Panc1 (cell line): ENCODE measurements at regions of chr10 and their contacts with region 1.

Region 1: DNA sequence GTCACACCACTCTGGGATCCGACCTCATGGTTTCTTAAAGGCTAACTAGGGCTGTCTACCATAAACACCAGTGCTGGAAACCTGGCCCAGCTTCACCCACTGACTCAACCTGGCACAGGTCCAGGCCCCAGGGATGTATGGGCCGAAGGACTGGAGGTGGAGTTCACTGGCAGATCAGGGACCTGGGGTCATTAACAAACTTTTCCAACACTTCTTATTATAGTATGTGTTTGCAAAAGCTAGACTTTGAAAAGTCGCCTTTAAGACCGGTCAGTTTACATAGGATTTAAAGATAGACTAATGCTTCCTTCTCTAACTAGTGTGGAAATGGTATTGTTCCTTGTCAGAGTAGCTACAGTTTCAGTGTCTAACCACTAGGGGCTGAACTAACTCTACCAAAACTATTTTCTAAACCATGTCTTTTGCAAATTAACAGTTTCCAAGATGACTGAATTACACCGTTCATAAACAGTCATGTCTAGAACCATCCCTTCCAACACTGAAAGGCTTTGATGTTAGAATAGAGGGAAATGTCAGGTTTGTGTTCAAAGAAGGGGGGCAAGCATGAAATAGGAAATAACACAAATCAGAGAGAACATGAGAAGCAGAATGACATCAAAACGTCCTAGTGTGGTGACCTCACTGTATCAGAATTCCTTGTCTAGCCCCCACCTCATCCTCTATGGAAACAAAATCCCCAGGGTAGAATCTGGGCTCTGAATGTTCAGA is 29.7 kb downstream of the STN1 start:
- DNase-seq: peak; percentile 75
- ATAC-seq: peak; percentile 75
- H3K4me3 ChIP-seq: no peak overlapping the region
- H3K27ac ChIP-seq: no peak overlapping the region; the same call in 1 of the 2 replicates
- H3K4me1 ChIP-seq: peaks cover 7% of the 10 kb centered on the region; the same call in 1 of the 2 replicates
- H3K27me3 ChIP-seq: no peaks in the 10 kb centered on the region
- CTCF ChIP-seq: peak; percentile 89

Region 2: DNA sequence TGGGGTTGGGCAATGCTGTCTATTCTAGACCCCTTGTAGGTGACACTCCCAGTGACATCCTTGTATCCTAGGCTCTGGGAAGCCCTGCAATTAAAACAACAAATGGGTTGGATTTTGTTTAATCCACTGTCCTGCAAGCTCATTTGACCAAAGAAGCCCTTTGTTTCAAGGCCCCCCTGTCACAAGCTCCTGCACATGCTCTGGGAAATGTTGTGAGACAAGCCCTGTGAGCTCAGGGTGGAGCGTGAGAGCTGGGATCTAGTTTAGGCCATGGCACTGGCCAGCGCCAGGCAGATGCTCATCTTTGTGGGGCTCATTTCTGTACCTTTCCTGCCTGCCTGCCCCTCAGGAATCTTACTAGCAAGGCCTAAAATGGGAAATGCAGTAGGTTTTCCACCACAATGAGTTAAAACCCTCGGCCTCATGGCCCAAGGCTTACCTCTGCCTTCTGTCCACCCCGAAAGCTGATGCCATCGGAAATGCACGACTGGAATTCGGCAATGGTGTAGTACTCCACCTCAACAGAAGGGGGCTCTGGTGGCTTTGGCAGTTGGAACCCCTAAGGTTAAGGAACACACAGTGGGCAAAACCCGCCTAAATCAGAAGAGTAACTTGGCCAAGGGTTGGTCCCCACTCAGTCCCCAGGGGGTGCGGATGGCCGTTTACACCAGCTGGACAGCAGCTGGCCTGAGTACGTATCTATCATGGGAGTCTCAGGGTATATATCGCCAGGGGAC is 282.8 kb before region 1 on chr10:
- CTCF ChIA-PET with region 1: no interaction called
- POLR2A ChIA-PET with region 1: interaction called, 11 read pairs
- in situ Hi-C with region 1: no loop called
- intact Hi-C with region 1: no loop called
- DNase-seq: peak; percentile 8
- ATAC-seq: peak; percentile 55
- H3K4me3 ChIP-seq: no peak overlapping the region
- H3K27ac ChIP-seq: no peak overlapping the region
- H3K4me1 ChIP-seq: no peaks in the 10 kb centered on the region
- H3K27me3 ChIP-seq: no peaks in the 10 kb centered on the region
- CTCF ChIP-seq: peak; percentile 82

Region 3: DNA sequence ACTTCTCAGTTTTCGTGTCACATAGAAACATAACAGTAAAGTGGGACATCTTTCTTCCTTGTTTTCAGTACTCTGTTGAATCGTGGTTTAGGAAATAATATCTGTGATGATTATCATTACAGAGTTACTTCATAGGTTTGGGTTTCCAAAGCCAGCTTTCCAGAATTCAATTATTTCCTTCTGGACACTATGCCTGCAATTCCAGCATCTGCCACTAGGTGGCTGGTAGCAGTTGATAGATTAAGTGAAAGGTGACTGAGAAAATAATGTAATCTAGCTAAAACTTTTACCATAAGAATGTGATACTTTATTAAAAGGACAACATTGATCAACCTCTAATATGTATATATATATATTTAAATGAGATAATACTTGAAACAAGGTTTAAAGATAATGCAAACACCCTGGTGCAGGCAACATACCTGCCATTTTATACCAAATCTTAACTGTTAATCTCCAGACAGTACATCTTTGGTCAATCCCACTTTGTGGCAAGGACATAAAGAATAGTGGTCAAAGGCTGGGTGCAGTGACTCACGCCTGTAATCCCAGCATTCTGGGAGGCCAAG is 135.5 kb before region 1 on chr10:
- CTCF ChIA-PET with region 1: no interaction called
- POLR2A ChIA-PET with region 1: interaction called, 10 read pairs
- in situ Hi-C with region 1: no loop called
- intact Hi-C with region 1: no loop called
- DNase-seq: no peak
- ATAC-seq: no peak
- H3K4me3 ChIP-seq: no peak overlapping the region
- H3K27ac ChIP-seq: no peak overlapping the region
- H3K4me1 ChIP-seq: peaks cover 12% of the 10 kb centered on the region
- H3K27me3 ChIP-seq: no peaks in the 10 kb centered on the region
- CTCF ChIP-seq: peak; percentile 87

Region 4: GRCh38 chr10:103983367-103983911 is 95.2 kb after region 1 on chr10:
- CTCF ChIA-PET with region 1: no interaction called
- POLR2A ChIA-PET with region 1: no interaction called
- in situ Hi-C with region 1: no loop called
- intact Hi-C with region 1: no loop called
- DNase-seq: no peak
- ATAC-seq: peak; percentile 58; the same call in 1 of the 2 replicates
- H3K4me3 ChIP-seq: no peak overlapping the region
- H3K27ac ChIP-seq: no peak overlapping the region
- H3K4me1 ChIP-seq: peaks cover 21% of the 10 kb centered on the region
- H3K27me3 ChIP-seq: no peaks in the 10 kb centered on the region
- CTCF ChIP-seq: no peak

Region 5: GRCh38 chr10:104028146-104028545 is 139.9 kb after region 1 on chr10:
- CTCF ChIA-PET with region 1: interaction called, 3 read pairs
- POLR2A ChIA-PET with region 1: no interaction called
- in situ Hi-C with region 1: no loop called
- intact Hi-C with region 1: loop called (anchors 5 kb)
- DNase-seq: no peak
- ATAC-seq: peak; percentile 97
- H3K4me3 ChIP-seq: no peak overlapping the region
- H3K27ac ChIP-seq: no peak overlapping the region
- H3K4me1 ChIP-seq: no peaks in the 10 kb centered on the region
- H3K27me3 ChIP-seq: no peaks in the 10 kb centered on the region
- CTCF ChIP-seq: peak; percentile 70

Region 6: GRCh38 chr10:104209575-104210198 is 321.4 kb after region 1 on chr10:
- CTCF ChIA-PET with region 1: no interaction called
- POLR2A ChIA-PET with region 1: no interaction called
- in situ Hi-C with region 1: no loop called
- intact Hi-C with region 1: loop called (anchors 5 kb)
- DNase-seq: no peak
- ATAC-seq: peak; percentile 85
- H3K4me3 ChIP-seq: no peak overlapping the region
- H3K27ac ChIP-seq: no peak overlapping the region
- H3K4me1 ChIP-seq: no peaks in the 10 kb centered on the region
- H3K27me3 ChIP-seq: peaks cover 19% of the 10 kb centered on the region
- CTCF ChIP-seq: peak; percentile 84

Region 7: DNA sequence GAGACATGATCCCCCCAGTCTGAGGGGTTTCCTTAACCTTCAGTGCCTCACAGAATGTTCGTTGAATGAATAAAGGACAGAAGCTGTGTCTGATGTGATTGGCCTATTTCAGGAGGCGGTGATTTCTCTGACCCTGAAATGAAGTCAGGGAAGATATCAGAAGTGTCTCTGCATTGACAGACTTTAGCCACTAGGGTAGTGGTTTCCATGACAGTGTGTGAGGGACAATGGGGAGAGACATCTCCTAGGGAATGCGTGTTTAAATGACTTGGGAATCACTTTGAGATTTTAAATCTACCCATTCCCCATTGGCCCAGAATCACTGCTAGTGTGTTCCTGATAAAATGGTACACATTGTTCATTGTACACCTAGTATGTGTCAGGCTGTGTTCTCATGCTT is 597.4 kb after region 1 on chr10:
- CTCF ChIA-PET with region 1: no interaction called
- POLR2A ChIA-PET with region 1: no interaction called
- in situ Hi-C with region 1: no loop called
- intact Hi-C with region 1: no loop called
- DNase-seq: no peak
- ATAC-seq: no peak
- H3K4me3 ChIP-seq: no peak overlapping the region
- H3K27ac ChIP-seq: no peak overlapping the region
- H3K4me1 ChIP-seq: no peaks in the 10 kb centered on the region
- H3K27me3 ChIP-seq: peaks cover 5% of the 10 kb centered on the region; the same call in 1 of the 2 replicates
- CTCF ChIP-seq: no peak